A673 (cell line): ENCODE measurements at regions of chr10 and their contacts with region 1.

Region 1: GRCh38 chr10:91551856-91552255 is 81.0 kb downstream of the PPP1R3C start:
- DNase-seq: peak; percentile 78
- H3K4me3 ChIP-seq: no peak overlapping the region
- H3K27ac ChIP-seq: no peak overlapping the region
- H3K4me1 ChIP-seq: peaks cover 3% of the 10 kb centered on the region
- H3K27me3 ChIP-seq: no peaks in the 10 kb centered on the region
- CTCF ChIP-seq: peak; percentile 94

Region 2: GRCh38 chr10:91389636-91390512 is 162.0 kb before region 1 on chr10:
- CTCF ChIA-PET with region 1: no interaction called
- POLR2A ChIA-PET with region 1: no interaction called
- intact Hi-C with region 1: loop called (anchors 2 kb)
- DNase-seq: peak; percentile 78
- H3K4me3 ChIP-seq: peak overlapping the region; percentile 24
- H3K27ac ChIP-seq: no peak overlapping the region
- H3K4me1 ChIP-seq: peaks cover 3% of the 10 kb centered on the region
- H3K27me3 ChIP-seq: no peaks in the 10 kb centered on the region
- CTCF ChIP-seq: peak; percentile 67

Region 3: DNA sequence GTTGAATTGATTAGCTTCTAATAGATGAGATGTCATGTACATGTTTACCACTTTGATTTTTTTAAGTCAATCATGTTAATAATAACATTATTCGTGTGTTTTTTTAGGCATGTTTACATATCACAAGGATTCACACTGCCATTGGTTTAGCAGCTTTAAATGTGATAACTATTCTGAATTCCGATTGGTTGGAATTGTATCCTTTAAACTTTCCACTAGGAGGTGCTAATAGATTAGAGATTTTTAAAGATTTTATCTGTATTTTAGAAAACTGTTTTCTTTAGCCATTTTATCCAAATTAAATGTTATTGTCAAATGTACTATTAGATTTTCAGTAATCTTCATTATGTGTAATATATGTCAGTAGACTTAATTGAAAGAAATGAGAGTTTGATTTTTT is 58.5 kb before region 1 on chr10:
- CTCF ChIA-PET with region 1: interaction called, 6 read pairs
- POLR2A ChIA-PET with region 1: no interaction called
- intact Hi-C with region 1: loop called (anchors 2 kb)
- DNase-seq: peak; percentile 62
- H3K4me3 ChIP-seq: no peak overlapping the region
- H3K27ac ChIP-seq: no peak overlapping the region
- H3K4me1 ChIP-seq: peaks cover 8% of the 10 kb centered on the region
- H3K27me3 ChIP-seq: no peaks in the 10 kb centered on the region
- CTCF ChIP-seq: peak; percentile 61

Region 4: DNA sequence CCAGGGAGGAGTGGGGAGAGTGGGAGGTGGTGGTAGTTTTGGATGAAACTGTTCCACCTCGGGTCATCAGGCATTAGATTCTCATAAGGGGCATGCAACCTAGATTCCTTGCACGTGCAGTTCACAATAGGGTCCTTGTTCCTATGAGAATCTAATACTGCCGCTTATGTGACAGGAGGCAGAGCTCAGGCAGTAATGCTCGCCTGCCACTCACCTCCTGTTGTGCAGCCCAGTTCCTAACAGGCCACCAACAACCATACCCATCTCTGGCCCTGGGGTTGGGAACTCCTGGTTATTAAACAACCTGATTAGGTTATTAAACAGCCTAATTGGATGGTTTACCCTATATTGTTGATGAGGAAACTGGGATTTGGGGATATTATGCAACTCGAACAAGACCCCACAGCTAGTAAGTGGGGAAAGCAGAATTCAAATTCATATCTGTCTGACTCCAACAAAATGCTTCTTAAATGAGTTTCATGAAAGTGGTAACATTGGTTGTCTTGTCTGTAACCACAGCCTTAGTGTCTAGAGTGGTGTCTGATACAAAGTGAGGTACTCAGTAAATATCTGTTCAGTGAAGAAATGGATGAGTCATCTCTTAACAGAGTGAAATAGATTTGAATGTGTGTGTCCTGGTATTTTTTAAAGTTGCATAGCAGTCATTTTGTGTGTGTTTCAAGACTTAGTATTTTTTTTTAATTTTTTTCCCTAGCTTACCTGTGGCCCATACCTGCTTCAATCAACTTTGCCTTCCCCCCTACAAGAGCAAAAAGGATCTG is 40.1 kb before region 1 on chr10:
- CTCF ChIA-PET with region 1: no interaction called
- POLR2A ChIA-PET with region 1: no interaction called
- intact Hi-C with region 1: no loop called
- DNase-seq: peak; percentile 20
- H3K4me3 ChIP-seq: no peak overlapping the region
- H3K27ac ChIP-seq: no peak overlapping the region
- H3K4me1 ChIP-seq: peaks cover 12% of the 10 kb centered on the region
- H3K27me3 ChIP-seq: no peaks in the 10 kb centered on the region
- CTCF ChIP-seq: no peak

Region 5: DNA sequence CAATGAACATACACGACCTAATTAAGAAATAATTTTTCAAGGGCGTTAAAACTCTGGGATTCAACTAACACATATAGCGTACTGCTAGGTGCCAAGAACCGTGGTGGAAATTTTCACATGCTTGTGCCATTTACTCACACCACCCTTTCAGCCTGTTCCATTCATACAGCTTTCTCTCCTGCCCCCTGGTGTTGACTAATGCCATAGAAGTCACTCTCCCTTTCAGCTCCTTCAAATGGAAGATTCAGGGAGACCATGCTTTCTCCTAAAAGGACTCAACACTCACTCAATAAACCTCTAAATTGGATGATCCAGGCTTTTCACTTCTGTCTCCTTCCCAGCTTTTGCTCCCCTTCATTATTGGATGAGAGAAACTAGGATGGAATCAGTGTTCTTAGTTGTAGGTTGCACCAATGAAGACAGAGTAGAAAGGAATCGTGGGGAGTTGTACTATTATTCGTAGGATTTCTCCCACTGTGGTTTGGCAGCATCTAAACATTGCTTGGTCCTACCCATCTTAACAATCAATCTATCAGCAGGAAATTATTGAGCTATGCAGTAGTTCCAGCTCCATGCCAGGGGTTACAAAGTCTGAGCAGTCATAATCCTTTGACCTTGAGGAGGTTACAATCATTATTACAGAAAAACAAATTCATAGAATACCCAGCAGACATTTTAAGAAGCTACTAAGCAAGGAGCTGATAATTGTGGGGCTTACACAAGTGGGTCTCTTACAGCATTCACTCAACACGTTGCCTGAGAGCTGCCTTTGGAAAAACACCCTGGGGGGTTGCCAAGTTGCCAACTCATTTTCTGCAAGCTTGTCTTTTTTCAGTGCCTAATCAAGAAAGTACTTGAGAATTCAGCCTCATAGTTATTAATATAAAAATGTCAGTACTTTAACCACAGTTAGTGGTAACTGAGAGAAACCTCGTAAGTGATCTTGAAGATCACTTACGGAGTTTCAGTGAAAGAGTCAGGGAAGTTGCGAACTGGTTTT is 83.8 kb after region 1 on chr10:
- CTCF ChIA-PET with region 1: interaction called, 18 read pairs
- POLR2A ChIA-PET with region 1: no interaction called
- intact Hi-C with region 1: loop called (anchors 2 kb)
- DNase-seq: peak; percentile 88
- H3K4me3 ChIP-seq: no peak overlapping the region
- H3K27ac ChIP-seq: no peak overlapping the region
- H3K4me1 ChIP-seq: peaks cover 7% of the 10 kb centered on the region
- H3K27me3 ChIP-seq: no peaks in the 10 kb centered on the region
- CTCF ChIP-seq: peak; percentile 83

Region 6: GRCh38 chr10:91694170-91694794 is 142.4 kb after region 1 on chr10:
- CTCF ChIA-PET with region 1: no interaction called
- POLR2A ChIA-PET with region 1: no interaction called
- intact Hi-C with region 1: loop called (anchors 5 kb)
- DNase-seq: peak; percentile 62
- H3K4me3 ChIP-seq: no peak overlapping the region
- H3K27ac ChIP-seq: no peak overlapping the region
- H3K4me1 ChIP-seq: no peaks in the 10 kb centered on the region
- H3K27me3 ChIP-seq: no peaks in the 10 kb centered on the region
- CTCF ChIP-seq: peak; percentile 83